Activated CD4-positive, alpha-beta T cell treated with anti-CD3 and anti-CD28 coated beads, Interleukin-2, amount 10 ng/mL, durations not matched to agents 7 days and 5 days (primary cell): ENCODE measurements at regions of chr5 and their contacts with region 1.

Region 1: DNA sequence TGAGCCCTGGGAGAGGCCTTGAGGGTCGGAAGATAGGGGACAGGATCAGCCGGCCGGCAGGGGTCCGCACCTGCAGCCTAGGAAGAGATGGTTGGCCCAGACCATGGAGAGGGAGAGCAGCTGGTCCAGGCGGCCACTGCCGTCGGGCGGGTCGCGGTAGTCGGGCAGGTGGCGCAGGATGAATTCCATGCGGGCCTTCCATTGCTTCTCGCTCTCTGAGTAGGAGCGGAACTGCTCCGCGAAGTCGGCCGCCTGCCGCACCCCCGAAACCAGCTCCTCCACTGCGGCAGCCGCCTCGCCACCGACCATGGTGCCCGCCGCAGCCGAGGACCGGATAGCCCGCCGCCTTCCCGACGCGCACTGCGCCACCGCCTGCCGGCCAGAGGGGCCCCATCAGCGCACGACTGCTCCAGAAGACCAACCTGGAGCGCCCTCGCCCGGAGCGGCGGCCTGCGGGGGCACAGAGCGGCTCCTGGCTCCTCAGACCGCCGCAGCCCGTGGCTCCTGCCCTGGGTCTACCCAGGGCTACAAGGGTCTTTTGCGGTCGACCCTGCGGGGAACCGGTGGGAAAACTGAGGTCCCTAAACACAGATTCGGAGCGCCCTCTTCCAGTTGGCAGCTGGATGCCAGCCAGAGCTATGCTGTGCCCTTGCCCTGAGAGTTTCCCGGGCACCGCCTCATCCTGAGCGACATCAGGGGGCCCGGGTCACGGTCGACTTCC is at the start of gene CDKN2AIPNL:
- DNase-seq: peak; percentile 88
- H3K4me3 Mint-ChIP-seq: peak within 1 kb of the TSS; percentile 95
- H3K27ac Mint-ChIP-seq: peak within 1 kb of the TSS; percentile 95
- H3K4me1 Mint-ChIP-seq: peaks cover 41% of the 10 kb centered on the region
- H3K27me3 Mint-ChIP-seq: no peaks in the 10 kb centered on the region
- total RNA-seq, gene CDKN2AIPNL: 24.1 to 27.6 TPM

Region 2: GRCh38 chr5:134394932-134395331 is 16.8 kb before region 1 on chr5:
- CTCF ChIA-PET with region 1: interaction called, 12 read pairs
- POLR2A ChIA-PET with region 1: no interaction called
- DNase-seq: no peak
- H3K4me3 Mint-ChIP-seq: no peak overlapping the region
- H3K27ac Mint-ChIP-seq: no peak overlapping the region
- H3K4me1 Mint-ChIP-seq: no peaks in the 10 kb centered on the region
- H3K27me3 Mint-ChIP-seq: no peaks in the 10 kb centered on the region

Region 3: GRCh38 chr5:134423421-134423820 is 11.7 kb after region 1 on chr5:
- CTCF ChIA-PET with region 1: interaction called, 14 read pairs
- POLR2A ChIA-PET with region 1: no interaction called
- DNase-seq: no peak
- H3K4me3 Mint-ChIP-seq: no peak overlapping the region
- H3K27ac Mint-ChIP-seq: no peak overlapping the region
- H3K4me1 Mint-ChIP-seq: no peaks in the 10 kb centered on the region
- H3K27me3 Mint-ChIP-seq: no peaks in the 10 kb centered on the region